Activated B cell treated with CpG ODN at 0.5 μM for 24 hours (primary cell): ENCODE measurements at regions of chr4 and their contacts with region 1.

Region 1: DNA sequence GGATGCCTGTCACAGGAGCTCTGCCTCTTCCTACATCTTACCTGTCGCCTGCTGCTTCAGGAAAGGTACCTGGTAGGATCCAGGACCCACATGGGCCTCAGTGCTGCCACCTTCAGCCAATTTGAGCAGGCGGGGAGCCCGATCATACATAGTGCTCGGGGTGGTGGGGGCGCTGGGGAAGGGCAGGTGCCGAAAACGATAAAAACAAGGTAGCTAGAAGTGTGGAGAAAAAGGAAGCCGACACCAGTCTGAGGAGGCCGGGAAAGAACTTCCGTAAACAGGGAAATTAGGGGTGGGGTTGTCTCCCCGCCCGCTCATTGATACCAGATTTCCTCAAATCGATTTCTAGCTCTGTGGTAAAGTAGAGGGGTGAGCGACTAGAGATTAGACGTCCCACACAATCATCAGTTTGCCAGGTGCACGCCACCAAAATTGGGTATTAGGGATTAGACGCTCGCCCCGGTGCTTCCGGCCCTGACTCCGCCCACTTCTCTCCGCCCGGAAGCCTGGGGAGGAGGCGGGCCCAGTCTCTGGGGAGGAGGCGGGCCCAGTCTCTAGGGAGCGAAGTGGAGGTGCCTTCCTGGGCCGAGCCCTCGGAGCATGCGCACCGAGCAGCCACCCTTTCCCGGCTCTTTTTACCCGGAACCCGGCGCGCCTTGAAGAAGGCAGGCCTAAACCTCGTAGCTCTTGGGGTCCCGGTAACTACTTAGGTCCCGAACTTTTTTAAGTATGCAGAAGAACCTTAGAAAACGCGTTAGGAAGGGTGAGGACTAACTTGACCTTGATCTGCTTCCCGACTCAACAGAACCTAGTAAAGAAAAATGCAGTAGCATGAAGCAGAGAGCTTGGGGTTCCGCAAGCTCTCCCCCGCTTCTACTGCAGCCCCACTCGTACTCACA is at the start of gene STPG2:
- DNase-seq: peak; percentile 97
- ATAC-seq: peak; percentile 99
- H3K4me3 Mint-ChIP-seq: peak within 1 kb of the TSS; percentile 92
- H3K27ac Mint-ChIP-seq: peak within 1 kb of the TSS; percentile 97
- H3K4me1 Mint-ChIP-seq: peaks cover 25% of the 10 kb centered on the region
- H3K27me3 Mint-ChIP-seq: no peaks in the 10 kb centered on the region
- CTCF ChIP-seq: no peak
- total RNA-seq, gene STPG2: 0.37 and 0.69 TPM in 2 replicates

Region 2: DNA sequence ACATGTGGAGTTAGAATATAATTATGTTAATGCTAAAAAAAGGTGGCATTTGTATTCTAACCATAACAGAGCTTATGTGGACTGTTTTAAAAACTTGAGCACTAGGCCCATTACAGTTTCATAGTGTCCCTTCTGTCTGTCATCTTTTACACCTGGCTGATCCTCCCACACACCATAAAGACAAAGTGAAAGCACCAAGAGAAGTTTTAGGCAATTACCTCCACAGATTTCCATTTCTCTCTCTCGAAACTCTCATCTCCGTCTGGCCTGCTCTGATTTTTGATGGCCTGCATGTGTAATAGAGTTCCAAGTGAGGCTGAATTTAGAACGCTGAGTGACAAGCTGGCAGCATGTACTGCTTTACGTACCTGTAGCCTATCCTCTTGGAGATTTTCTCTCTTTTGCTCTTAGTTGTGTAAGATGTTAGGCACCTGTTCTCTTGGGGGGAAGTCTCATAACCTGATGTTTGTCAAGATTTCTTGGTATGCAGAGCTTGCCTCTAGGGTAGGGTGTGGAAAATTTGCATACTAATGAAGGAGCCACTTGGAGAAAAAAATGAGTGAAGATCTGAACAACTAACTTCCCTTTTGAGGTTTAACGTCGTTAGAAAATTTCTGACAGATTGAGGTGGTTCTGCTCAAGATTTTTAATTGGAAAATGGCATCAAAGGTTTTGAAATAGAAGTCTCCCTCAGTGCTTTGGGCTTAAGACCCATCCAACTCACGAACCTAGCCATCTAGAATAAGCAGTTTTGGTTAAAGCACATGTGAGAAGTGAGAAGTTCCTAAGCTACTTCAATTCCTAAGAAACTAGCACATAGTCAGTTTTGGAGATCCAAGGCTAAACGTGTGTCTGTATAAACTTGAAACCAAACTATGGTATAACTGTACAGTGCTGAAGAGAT is 60.3 kb after region 1 on chr4:
- CTCF ChIA-PET with region 1: interaction called, 3 read pairs
- POLR2A ChIA-PET with region 1: interaction called, 20 read pairs
- intact Hi-C with region 1: loop called (anchors 1 kb)
- DNase-seq: no peak
- ATAC-seq: peak; percentile 82
- H3K4me3 Mint-ChIP-seq: peak overlapping the region; percentile 62
- H3K27ac Mint-ChIP-seq: peak overlapping the region; percentile 86
- H3K4me1 Mint-ChIP-seq: peaks cover 37% of the 10 kb centered on the region
- H3K27me3 Mint-ChIP-seq: no peaks in the 10 kb centered on the region
- CTCF ChIP-seq: no peak

Region 3: GRCh38 chr4:98260579-98261290 is 117.5 kb after region 1 on chr4:
- CTCF ChIA-PET with region 1: interaction called, 3 read pairs
- POLR2A ChIA-PET with region 1: interaction called, 44 read pairs
- intact Hi-C with region 1: loop called (anchors 1 kb)
- DNase-seq: peak; percentile 89
- ATAC-seq: peak; percentile 93
- H3K4me3 Mint-ChIP-seq: peak overlapping the region; percentile 95
- H3K27ac Mint-ChIP-seq: peak overlapping the region; percentile 94
- H3K4me1 Mint-ChIP-seq: peaks cover 48% of the 10 kb centered on the region
- H3K27me3 Mint-ChIP-seq: no peaks in the 10 kb centered on the region
- CTCF ChIP-seq: no peak

Region 4: DNA sequence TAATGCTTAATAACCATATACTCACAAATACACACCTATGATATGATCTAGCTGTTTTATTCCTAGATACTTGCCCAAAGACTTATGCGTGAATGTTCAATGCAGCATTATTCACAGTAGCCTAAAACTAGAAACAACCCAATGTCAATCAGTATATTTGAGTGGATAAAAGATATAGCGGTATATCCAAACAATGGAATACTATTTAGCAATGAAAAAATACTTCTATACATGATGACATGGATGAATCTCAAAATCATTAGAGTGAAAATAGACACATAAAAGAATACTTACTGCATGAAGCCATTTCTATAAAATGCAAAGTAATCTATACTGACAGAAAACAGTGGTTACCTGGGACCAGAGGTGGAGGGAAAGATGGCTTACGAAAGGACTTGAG is 226.1 kb after region 1 on chr4:
- CTCF ChIA-PET with region 1: no interaction called
- POLR2A ChIA-PET with region 1: no interaction called
- intact Hi-C with region 1: no loop called
- DNase-seq: no peak
- ATAC-seq: no peak
- H3K4me3 Mint-ChIP-seq: no peak overlapping the region
- H3K27ac Mint-ChIP-seq: no peak overlapping the region
- H3K4me1 Mint-ChIP-seq: no peaks in the 10 kb centered on the region
- H3K27me3 Mint-ChIP-seq: no peaks in the 10 kb centered on the region
- CTCF ChIP-seq: no peak

Region 5: DNA sequence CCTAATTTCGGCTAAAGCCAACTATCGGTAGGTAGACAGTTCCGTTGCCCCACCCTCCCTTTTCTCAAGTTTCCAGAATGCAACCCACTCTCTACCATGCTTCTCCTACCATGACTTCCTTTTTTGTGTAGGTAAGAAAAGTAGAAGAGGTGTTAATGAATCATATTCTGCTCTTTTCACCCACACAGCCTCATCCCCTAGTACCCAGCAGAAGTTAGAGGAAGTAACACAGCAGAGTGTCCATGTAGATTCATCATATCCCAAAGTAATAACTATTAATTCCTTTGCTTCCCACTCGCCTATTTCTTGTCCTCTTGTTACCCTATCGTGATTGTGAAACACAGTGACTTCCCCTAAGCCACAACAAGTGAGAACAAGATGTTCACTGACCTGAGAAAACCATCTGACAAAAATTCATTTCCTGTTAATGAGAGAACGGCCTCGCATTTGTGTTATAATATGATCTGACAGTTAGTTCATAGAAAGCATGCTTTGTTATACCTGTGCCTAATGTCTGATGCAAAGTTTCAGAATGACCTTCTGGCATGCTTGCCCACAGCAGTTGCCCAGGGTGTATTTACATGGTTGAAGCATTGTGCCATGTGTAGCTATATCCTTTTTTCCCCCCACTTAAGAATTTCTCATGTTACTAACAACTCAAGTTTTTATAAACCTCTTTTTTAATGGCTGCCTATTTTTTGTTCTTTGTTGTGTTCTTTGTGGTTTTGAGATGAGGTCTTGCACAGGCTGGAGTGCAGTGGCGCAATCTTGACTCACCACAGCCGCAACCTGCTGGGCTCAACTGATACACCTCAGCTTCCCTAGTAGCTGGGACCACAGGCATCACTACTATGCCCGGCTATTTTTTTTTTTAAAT is 303.5 kb after region 1 on chr4:
- CTCF ChIA-PET with region 1: no interaction called
- POLR2A ChIA-PET with region 1: interaction called, 4 read pairs
- intact Hi-C with region 1: loop called (anchors 2 kb)
- DNase-seq: no peak
- ATAC-seq: peak; percentile 67
- H3K4me3 Mint-ChIP-seq: peak overlapping the region; percentile 72
- H3K27ac Mint-ChIP-seq: peak overlapping the region; percentile 87
- H3K4me1 Mint-ChIP-seq: peaks cover 41% of the 10 kb centered on the region
- H3K27me3 Mint-ChIP-seq: no peaks in the 10 kb centered on the region
- CTCF ChIP-seq: no peak

Region 6: DNA sequence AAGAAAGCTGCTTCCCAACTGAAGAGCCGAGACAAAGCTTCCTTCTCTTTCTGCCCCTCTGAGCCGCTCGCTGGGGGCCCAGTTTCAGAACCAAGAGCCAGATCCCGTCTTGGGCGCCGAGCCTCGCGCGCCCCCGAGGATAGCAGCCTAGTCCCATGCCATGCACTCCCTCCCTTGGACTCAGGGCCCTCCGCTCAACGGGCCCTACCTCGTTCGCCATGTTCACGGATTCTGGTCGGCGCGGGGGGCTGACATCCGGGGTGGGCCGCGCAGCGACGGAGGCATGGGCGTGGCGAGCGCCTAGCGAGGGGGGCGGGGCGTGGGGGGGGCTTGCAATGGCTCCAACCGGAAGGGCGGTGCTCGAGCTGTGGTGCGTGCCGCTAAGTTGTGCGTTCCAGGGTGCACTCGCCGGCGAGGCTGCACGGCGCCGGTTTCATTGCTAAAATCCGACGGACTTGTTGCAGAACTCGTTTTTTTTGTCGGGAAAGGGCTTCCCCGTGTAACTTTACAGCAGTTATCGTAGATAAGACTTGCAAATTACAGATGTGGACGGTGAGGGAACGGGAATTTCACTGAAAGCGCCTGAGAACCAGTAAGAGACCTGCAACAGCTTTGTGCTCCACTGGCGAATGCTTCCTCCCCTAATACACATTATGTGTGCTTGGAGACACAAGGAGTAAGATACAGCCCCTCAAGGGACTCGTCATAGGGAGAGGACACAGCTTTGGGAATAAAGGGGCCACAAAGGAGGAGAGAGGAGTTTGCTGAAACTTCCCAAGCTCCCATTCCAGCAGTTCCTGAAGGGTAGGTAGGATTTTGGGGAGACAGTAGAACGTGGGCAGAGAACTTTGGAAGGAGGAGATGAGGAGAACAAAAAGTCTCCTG is 945.5 kb after region 1 on chr4 and contains the start of gene ADH5:
- CTCF ChIA-PET with region 1: no interaction called
- POLR2A ChIA-PET with region 1: interaction called, 15 read pairs
- intact Hi-C with region 1: loop called (anchors 1 kb)
- DNase-seq: peak; percentile 77
- ATAC-seq: peak; percentile 95
- H3K4me3 Mint-ChIP-seq: peak within 1 kb of the TSS; percentile 99
- H3K27ac Mint-ChIP-seq: peak within 1 kb of the TSS; percentile 99
- H3K4me1 Mint-ChIP-seq: peaks cover 41% of the 10 kb centered on the region
- H3K27me3 Mint-ChIP-seq: no peaks in the 10 kb centered on the region
- CTCF ChIP-seq: no peak
- total RNA-seq, gene ADH5: 70.1 and 74.2 TPM in 2 replicates

Region 7: GRCh38 chr4:99405433-99406115 is 1262.3 kb after region 1 on chr4:
- CTCF ChIA-PET with region 1: no interaction called
- POLR2A ChIA-PET with region 1: interaction called, 4 read pairs
- intact Hi-C with region 1: loop called (anchors 2 kb)
- DNase-seq: no peak
- ATAC-seq: peak; percentile 69
- H3K4me3 Mint-ChIP-seq: no peak overlapping the region
- H3K27ac Mint-ChIP-seq: no peak overlapping the region
- H3K4me1 Mint-ChIP-seq: peaks cover 7% of the 10 kb centered on the region
- H3K27me3 Mint-ChIP-seq: peaks cover 1% of the 10 kb centered on the region
- CTCF ChIP-seq: no peak

Region 8: DNA sequence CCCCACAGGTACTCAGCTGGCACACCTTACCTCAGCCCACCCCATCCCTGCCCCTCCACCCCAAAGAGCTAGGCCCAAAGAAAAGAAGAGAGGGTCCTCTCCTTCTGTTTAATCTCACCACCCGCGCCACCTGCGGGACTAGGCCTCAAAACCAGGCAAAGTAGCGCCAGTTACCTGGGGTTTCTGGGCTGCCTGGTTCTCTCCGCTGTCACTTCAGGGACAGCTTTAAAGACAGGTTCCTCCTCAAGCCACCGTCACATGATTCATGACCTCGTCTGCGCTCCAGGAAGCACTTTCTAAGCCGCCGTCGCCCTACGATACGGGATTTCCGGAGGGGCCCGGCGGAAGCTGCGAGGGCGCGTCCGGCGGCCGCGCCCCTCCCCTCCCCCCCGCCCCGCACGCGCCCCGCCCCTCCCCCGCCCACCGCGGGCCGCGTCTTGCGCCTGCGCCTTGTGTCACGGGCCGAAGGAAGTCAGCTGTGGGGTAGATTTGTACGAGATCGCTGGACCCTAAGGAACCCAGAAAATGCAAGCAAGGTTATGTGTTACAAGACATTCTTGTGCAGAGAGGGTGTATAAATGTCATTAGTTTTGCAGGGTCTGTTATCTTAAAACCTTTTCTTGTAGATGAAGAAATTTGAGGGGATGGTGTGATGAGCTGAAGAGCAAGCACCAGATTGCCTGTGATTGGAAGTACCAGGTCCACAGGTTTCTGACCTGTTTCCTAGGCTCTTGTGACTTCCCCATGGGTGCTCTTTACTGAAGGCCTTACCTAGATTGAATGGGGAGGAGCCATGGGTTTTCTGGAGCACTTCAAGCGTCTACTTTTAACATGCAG is 1751.1 kb after region 1 on chr4 and contains the start of gene LAMTOR3:
- CTCF ChIA-PET with region 1: no interaction called
- POLR2A ChIA-PET with region 1: interaction called, 3 read pairs
- intact Hi-C with region 1: loop called (anchors 1 kb)
- DNase-seq: peak; percentile 78
- ATAC-seq: peak; percentile 98
- H3K4me3 Mint-ChIP-seq: peak within 1 kb of the TSS; percentile 94
- H3K27ac Mint-ChIP-seq: peak within 1 kb of the TSS; percentile 90
- H3K4me1 Mint-ChIP-seq: peaks cover 26% of the 10 kb centered on the region
- H3K27me3 Mint-ChIP-seq: no peaks in the 10 kb centered on the region
- CTCF ChIP-seq: no peak
- total RNA-seq, gene LAMTOR3: 21.9 and 23.8 TPM in 2 replicates